Dorsolateral prefrontal cortex (tissue), 120 donors: ENCODE measurements at regions of chr13 and their contacts with region 1.

Region 1: DNA sequence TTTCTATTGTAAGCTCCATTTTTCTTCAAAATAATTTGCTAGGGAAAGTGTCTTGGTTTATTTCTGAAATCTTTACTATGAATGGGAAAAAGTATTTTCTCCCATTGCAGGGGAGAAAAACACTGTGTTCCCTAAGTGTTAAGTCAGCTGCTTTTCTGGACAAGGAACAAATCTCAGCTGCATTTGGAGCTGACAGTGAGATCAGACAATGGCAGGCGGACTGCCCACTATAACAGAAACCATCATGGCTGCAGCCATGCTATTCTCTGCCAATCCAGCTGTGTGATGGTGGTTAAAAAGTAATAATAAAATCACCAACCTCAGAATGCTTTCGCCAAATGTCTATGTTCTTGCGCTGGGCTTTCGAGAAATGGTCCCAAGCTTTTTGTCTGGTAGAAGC is 302.7 kb downstream of the DNAJC15 start:
- DNase-seq: peak in 5 of 10 donors; percentile 37 to 73 (median 60)
- H3K4me3 ChIP-seq: peak overlapping the region in 2 of 59 donors; percentile 3 to 9
- H3K27ac ChIP-seq: peak overlapping the region in 58 of 59 donors; percentile 59 to 98 (median 90)
- H3K27me3 ChIP-seq: no peaks in the 10 kb centered on the region
- CTCF ChIP-seq: peak in 4 of 56 donors; percentile 8 to 18 (median 16)

Region 2: GRCh38 chr13:43411741-43412140 is 85.6 kb after region 1 on chr13:
- intact Hi-C with region 1: loop called in 1 of 2 experiments (anchors 5 kb)
- DNase-seq: peak in 7 of 10 donors; percentile 35 to 60 (median 52)
- H3K4me3 ChIP-seq: peak overlapping the region in 47 of 59 donors; percentile 1 to 57 (median 28)
- H3K27ac ChIP-seq: peak overlapping the region in 58 of 59 donors; percentile 36 to 94 (median 85)
- H3K27me3 ChIP-seq: no peaks in the 10 kb centered on the region
- CTCF ChIP-seq: peak in 1 of 56 donors; percentile 21

Region 3: DNA sequence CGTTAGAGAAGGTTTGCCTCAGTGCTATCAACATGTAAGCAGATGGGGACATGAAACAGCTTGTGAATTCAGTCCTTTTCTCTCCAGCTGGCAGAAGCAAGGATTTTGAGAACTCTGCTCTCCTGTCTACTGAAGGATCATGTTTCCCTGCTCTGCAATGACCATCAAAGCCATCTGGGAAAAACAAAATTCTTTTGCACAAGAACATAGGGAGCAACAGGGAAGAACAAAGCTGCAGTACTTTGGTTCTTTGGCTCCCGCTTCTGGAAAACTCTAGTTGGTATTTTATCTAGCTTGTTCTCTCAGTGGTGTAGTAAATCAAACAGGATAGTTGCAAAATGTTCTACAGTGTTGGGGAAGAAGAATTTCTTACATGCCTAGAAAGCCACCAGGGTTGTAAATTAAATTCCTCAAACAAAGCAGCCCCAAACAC is 190.3 kb after region 1 on chr13:
- intact Hi-C with region 1: no loop called
- DNase-seq: no peak
- H3K4me3 ChIP-seq: no peak overlapping the region
- H3K27ac ChIP-seq: peak overlapping the region in 26 of 59 donors; percentile 2 to 59 (median 18)
- H3K27me3 ChIP-seq: no peaks in the 10 kb centered on the region
- CTCF ChIP-seq: no peak